GM13976 (cell line): ENCODE measurements at regions of chr17 and their contacts with region 1.

Region 1: DNA sequence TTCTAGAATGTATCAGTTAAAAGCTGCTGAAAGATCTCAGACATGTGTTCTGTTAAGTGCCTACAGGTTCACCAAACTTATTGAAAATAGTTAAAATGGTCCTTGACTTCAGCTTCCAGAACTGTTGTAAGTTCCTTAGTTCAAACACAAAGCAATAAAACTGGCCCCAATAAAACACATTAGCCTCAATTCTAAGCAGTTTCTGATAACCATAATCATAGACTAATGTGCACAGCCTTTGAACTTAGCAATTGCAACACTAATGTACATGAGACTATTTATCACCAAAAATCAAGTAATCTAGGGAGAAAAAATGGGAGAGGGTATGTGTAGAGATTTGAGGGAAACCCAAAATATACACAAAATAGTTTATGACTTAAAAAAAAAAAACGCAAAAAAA is 15.4 kb downstream of the PIGL start:
- DNase-seq: no peak
- CTCF ChIP-seq: no peak

Region 2: DNA sequence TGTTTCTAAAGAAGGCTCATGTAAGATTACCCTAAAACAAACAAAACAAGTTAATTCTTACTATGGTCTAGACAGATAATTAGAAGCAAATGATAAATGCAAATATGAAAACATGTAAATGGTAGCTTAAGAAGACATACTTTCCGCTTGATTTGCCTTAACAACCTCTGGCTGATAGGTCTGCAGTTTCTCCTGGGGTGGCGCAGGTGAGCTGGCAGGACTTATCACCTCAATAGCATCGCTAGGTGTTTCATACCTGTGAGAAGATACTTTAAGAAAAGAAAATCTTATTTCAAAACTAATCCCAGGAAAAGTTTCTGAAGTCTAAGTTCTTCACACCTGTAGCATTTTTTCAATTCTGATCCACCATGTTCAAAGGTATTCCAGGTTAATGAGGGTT is 174.1 kb before region 1 on chr17:
- in situ Hi-C with region 1: no loop called
- DNase-seq: no peak
- CTCF ChIP-seq: no peak

Region 3: DNA sequence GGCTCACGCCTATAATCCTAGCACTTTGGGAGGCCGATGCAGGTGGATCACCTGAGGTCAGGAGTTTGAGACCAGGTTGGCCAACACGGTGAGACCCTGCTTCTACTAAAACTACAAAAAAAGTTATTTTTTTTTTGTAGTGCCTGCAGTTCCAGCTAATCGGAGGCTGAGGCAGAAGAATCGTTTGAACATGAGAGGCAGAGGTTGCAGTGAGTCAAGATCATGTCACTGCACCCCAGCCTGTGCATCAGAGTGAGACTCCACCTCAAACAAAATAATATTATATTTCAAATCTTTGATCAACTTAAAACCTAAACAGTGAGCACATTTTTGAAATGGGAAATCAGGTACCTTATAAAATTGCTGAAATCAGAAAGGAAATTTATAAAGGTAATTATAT is 53.6 kb before region 1 on chr17:
- in situ Hi-C with region 1: no loop called
- DNase-seq: no peak
- CTCF ChIP-seq: no peak

Region 4: DNA sequence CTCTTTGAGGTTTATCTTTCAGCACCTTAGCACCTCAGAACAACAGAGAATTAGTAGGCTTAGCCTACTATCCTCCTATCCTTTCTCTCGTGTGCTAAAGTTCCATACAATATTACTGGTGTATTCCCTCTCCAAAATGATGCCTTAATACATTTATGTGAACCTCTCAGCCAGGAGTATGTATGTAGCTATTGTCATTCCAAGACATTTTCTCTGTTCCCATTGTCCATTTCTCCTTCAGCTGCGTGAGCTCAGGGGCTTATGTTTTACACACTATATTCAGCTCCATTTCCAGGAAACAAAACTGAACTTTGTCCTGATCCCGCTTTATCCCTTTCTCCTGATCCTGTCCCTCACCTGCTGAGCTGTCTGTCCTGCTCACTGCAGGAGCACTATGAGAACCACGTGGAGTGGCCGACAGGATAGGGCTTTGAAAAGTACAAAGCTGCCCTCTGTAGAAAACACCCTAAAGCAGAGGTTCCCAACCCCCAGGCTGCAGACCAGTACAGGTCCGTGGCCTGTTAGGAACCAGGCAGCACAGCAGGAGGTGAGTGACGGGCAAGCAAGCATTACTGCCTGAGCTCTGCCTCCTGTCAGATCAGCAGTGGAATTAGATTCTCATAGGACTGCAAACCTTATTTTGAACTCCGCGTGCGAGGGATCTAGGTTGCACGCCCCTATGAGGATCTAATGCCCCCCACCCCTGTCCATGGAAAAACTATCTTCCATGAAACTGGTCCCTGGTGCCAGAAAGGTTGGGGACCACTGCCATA is 65.2 kb after region 1 on chr17:
- in situ Hi-C with region 1: loop called (anchors 10 kb)
- DNase-seq: peak; percentile 4
- CTCF ChIP-seq: no peak

Region 5: DNA sequence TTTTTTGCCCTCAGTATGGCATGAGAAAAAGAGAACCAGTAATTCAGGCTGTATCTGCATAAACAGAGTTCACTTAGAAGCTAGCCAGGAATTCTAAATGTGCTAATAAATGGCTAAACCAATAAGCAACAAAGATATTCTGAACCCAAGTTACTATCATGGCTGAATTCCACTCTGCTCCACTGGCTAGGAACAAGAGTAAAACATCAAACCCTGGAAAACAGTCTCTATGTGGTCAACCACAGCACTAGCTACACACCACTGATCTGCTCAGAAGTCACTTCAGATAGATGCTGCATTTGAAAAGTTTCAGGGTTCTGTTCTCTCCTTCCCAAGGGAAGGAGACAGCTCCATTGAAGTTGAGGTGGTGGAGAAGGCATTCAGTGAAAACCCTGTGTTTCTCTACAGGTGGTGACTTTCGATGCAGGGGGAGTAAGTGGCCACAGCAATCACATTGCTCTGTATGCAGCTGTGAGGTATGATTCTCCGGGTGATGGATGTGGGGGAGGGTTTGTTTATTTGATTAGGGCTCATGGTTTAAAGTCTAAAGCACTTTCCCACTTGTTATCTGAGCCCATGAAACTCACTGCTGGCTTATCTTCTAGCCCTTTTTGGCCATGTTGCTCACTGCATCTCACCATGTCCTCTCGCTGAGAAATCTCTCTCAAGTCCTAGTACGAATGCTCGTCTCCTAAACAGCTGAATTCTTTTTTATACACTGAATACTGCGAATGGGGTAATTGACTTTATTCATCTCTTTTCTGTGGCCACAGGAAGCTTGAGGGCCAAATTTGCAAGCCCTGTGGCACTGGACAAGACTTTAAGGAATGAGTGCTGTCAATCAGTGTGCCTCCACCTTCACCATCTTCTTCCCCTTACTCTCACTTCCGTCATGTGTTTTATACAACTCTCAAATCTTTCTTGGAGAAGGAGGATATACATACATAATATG is 81.0 kb after region 1 on chr17:
- in situ Hi-C with region 1: no loop called
- DNase-seq: no peak
- CTCF ChIP-seq: no peak